Heart left ventricle (tissue), 16 donors: ENCODE measurements at regions of chr4 and their contacts with region 1.

Region 1: DNA sequence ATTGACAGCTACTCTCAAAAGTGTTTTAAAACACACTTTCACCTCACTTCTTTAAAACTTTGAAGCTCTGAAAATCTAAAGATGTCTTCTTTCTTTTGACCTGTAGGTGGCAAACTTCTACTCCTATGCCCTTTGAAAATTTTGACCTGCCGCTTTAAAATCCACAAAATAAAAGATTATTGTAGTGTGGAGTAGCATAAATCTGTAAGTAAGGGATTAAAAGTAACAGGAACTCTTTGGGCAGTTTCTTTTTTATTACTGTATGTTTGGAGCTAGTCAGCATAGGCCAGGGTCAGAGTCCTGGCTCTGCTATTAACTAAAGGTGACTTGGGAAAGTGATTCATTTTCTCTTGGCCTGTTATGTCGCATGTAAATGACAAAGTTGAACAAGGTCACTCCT is 25.5 kb downstream of the BBS12 start:
- DNase-seq: no peak
- ATAC-seq: peak in 2 of 4 donors; percentile 45 to 58
- H3K4me3 ChIP-seq: no peak overlapping the region
- H3K27ac ChIP-seq: no peak overlapping the region
- H3K4me1 ChIP-seq: peaks cover 0 to 13% (median 4%) of the 10 kb centered on the region in 12 donors
- H3K27me3 ChIP-seq: no peaks in the 10 kb centered on the region
- CTCF ChIP-seq: peak; percentile 66 to 89 (median 77)
- POLR2A ChIP-seq: no peak

Region 2: GRCh38 chr4:122555216-122555615 is 202.8 kb before region 1 on chr4:
- intact Hi-C with region 1: no loop called
- DNase-seq: no peak
- ATAC-seq: no peak
- H3K4me3 ChIP-seq: no peak overlapping the region
- H3K27ac ChIP-seq: no peak overlapping the region
- H3K4me1 ChIP-seq: no peaks in the 10 kb centered on the region
- H3K27me3 ChIP-seq: no peaks in the 10 kb centered on the region
- CTCF ChIP-seq: no peak
- POLR2A ChIP-seq: no peak

Region 3: GRCh38 chr4:122827879-122828601 is 70.0 kb after region 1 on chr4:
- intact Hi-C with region 1: loop called in 6 of 10 experiments (anchors 5 to 10 kb)
- DNase-seq: no peak
- ATAC-seq: peak; percentile 38 to 59 (median 52)
- H3K4me3 ChIP-seq: peak overlapping the region; percentile 66 to 86 (median 80)
- H3K27ac ChIP-seq: peak overlapping the region; percentile 68 to 93 (median 80)
- H3K4me1 ChIP-seq: peaks cover 0 to 14% (median 0%) of the 10 kb centered on the region in 12 donors
- H3K27me3 ChIP-seq: peaks cover 0 to 38% (median 0%) of the 10 kb centered on the region in 9 donors
- CTCF ChIP-seq: peak in 2 of 12 donors; percentile 5 to 7
- POLR2A ChIP-seq: no peak

Region 4: DNA sequence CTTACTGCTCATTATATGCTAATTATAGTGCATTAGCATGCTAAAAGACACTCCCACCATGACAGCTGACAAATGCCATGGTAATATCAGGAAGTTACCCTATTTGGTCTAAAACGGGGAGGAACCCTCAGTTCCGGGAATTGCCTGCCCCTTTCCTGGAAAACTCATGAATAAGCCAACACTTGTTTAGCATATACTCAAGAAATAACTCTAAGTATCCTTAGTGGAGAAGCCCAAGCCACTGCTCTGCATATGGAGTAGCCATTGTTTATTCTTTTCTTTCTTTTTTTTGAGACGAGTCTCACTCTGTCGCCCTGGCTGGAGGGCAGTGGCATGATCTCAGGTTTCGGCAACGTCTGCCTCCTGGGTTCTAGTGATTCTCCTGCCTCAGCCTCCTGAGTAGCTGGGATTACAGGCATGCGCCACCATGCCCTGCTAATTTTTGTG is 148.8 kb after region 1 on chr4:
- intact Hi-C with region 1: loop called in 3 of 10 experiments (anchors 5 kb)
- DNase-seq: no peak
- ATAC-seq: no peak
- H3K4me3 ChIP-seq: no peak overlapping the region
- H3K27ac ChIP-seq: no peak overlapping the region
- H3K4me1 ChIP-seq: no peaks in the 10 kb centered on the region
- H3K27me3 ChIP-seq: no peaks in the 10 kb centered on the region
- CTCF ChIP-seq: no peak
- POLR2A ChIP-seq: no peak

Region 5: GRCh38 chr4:122914292-122914904 is 156.4 kb after region 1 on chr4:
- intact Hi-C with region 1: loop called in 7 of 10 experiments (anchors 1 to 5 kb)
- DNase-seq: no peak
- ATAC-seq: peak in 2 of 4 donors; percentile 46 to 52
- H3K4me3 ChIP-seq: no peak overlapping the region
- H3K27ac ChIP-seq: no peak overlapping the region
- H3K4me1 ChIP-seq: no peaks in the 10 kb centered on the region
- H3K27me3 ChIP-seq: no peaks in the 10 kb centered on the region
- CTCF ChIP-seq: peak in 11 of 12 donors; percentile 13 to 62 (median 37)
- POLR2A ChIP-seq: no peak

Region 6: GRCh38 chr4:122922877-122923511 is 165.0 kb after region 1 on chr4:
- intact Hi-C with region 1: loop called in 6 of 10 experiments (anchors 2 to 5 kb)
- DNase-seq: peak; percentile 83 to 89 (median 87)
- ATAC-seq: peak; percentile 98 to 99 (median 99)
- H3K4me3 ChIP-seq: peak overlapping the region; percentile 68 to 95 (median 85)
- H3K27ac ChIP-seq: peak overlapping the region; percentile 62 to 86 (median 77)
- H3K4me1 ChIP-seq: peaks cover 0 to 21% (median 12%) of the 10 kb centered on the region in 12 donors
- H3K27me3 ChIP-seq: no peaks in the 10 kb centered on the region
- CTCF ChIP-seq: peak in 1 of 12 donors; percentile 5
- POLR2A ChIP-seq: no peak

Region 7: DNA sequence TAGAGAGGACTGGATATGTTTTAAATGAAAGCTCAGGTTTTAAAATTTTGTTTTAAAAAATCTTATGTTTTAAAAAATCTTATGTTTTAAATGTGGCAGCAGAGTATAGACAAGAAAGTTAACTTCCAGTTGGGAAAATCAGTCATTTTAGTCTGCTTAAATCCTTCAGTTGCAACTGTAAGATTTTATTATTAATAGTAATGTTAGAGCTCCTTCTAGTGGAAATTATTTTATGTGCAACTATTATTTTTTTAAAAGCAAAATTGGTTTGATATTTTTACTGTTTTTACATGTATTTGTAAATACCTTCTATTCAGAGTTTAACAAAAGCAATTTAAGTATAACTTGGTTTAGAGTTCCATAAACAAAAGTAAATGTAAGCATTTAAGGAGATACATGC is 172.8 kb after region 1 on chr4:
- intact Hi-C with region 1: loop called in 3 of 10 experiments (anchors 2 to 5 kb)
- DNase-seq: no peak
- ATAC-seq: no peak
- H3K4me3 ChIP-seq: no peak overlapping the region
- H3K27ac ChIP-seq: no peak overlapping the region
- H3K4me1 ChIP-seq: no peaks in the 10 kb centered on the region
- H3K27me3 ChIP-seq: no peaks in the 10 kb centered on the region
- CTCF ChIP-seq: peak; percentile 48 to 78 (median 64)
- POLR2A ChIP-seq: no peak